ENCODE measurements at regions of chr17 and their contacts with region 1.

Region 1: DNA sequence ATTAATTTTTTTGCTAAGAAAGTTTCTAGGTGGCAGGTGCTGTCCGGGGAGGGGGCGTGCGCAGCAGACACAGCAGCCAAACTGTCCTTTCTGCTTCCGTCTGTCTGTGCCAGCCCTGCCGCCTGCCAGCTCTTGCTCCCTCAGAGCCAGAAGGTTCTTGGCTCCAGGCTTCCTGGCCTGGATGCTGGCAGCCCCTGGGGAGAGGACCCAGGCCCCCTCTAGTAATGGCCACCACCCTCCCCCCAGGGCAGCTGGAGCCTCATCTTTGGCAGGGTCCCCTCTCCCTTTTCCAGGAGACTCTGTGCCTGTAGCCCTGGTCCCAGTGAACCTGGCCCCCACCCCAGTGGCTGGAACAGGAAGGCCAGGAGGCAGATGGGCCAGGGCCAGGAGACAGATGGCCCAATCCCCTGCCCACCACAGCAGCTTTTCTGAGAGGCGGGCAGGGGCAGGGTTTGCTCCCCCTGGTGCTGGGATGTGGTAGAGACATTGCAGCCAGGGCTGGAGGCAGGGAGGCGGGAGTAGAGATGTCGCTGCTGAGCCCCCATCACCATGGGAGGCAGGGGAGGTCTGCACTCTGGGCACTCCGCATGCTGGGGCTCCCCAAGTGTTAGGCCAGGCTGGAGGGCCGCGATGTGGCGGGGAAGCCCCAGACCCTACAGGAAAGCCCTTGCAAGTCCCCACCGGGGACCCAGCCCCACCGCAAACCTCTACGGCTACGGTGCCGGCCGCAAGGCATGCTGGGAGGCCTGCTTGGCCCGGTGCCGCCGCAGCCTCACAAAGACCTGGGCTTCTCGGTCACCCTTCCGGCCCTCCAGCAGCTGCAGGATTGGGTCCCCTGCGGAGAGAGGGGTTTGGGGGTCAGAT is 16.7 kb downstream of the UNC13D start:
- DNase-seq: no peak
- H3K4me3 ChIP-seq: peak overlapping the region; percentile 29
- CTCF ChIP-seq: peak; percentile 87

Region 2: DNA sequence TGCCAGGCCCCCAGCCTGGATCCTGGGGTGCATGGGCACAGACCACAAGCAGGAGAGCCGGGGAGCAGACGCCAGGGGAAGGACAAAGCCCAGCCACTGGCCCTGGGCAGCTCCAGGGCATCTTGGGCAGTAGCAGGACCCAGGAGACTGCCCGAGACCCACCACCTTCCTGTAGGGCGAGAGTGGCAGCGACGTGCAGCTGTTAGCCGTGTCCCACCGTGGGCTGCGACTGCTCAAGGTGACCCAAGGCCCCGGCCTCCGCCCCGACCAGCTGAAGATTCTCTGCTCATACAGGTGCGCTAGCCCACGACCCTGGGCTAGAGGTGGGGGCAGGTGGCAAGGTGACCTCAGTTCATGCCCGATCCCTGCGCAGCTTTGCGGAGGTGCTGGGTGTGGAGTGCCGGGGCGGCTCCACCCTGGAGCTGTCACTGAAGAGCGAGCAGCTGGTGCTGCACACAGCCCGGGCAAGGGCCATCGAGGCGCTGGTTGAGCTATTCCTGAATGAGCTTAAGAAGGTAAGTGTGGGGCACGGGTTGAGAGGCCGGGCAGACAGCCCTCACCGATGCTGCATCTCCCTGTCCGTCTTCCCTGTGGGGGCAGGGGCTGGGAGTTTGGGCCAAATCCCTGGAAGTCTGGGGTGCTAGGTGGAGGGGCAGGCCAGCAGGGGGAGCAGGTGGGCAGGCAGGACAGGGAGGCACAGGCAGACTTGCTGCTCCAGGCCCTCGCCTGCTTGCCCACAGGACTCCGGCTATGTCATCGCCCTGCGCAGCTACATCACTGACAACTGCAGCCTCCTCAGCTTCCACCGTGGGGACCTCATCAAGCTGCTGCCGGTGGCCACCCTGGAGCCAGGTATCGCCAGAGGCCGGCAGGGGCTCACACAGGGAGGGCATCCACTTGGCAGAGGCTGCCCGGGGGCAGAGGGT is 207.7 kb before region 1 on chr17:
- CTCF ChIA-PET with region 1: no interaction called
- POLR2A ChIA-PET with region 1: no interaction called
- DNase-seq: no peak
- H3K4me3 ChIP-seq: no peak overlapping the region
- CTCF ChIP-seq: peak; percentile 78

Region 3: GRCh38 chr17:75764711-75765421 is 62.6 kb before region 1 on chr17 and contains the start of gene GALK1:
- CTCF ChIA-PET with region 1: interaction called, 12 read pairs
- POLR2A ChIA-PET with region 1: interaction called, 3 read pairs
- DNase-seq: no peak
- H3K4me3 ChIP-seq: peak within 1 kb of the TSS; percentile 66
- CTCF ChIP-seq: peak; percentile 77

Region 4: GRCh38 chr17:75784473-75785015 is 42.9 kb before region 1 on chr17 and contains the start of gene UNK:
- CTCF ChIA-PET with region 1: interaction called, 15 read pairs
- POLR2A ChIA-PET with region 1: interaction called, 6 read pairs
- DNase-seq: peak; percentile 98
- H3K4me3 ChIP-seq: peak within 1 kb of the TSS; percentile 79
- CTCF ChIP-seq: no peak

Region 5: DNA sequence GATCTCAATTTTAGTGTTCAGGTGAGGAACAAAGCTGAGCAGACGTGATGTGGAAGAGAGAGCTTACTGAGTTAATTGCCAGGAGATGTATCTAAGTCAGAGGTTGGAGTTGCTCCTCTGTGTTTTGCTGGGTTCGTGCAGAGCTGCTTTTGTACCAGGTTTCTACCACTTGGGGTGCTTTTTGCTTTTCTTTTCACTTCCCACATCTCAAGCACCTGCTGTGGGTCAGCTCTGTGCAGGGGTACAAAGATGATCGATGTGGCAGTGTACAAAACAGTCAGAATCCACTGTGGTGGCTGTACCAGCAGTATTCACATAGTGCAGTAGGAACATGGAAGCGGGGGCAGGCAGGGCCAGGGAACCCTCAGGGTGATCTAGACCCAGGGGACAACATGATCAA is 28.1 kb before region 1 on chr17:
- CTCF ChIA-PET with region 1: interaction called, 72 read pairs
- POLR2A ChIA-PET with region 1: interaction called, 3 read pairs
- DNase-seq: no peak
- H3K4me3 ChIP-seq: no peak overlapping the region
- CTCF ChIP-seq: no peak

Region 6: DNA sequence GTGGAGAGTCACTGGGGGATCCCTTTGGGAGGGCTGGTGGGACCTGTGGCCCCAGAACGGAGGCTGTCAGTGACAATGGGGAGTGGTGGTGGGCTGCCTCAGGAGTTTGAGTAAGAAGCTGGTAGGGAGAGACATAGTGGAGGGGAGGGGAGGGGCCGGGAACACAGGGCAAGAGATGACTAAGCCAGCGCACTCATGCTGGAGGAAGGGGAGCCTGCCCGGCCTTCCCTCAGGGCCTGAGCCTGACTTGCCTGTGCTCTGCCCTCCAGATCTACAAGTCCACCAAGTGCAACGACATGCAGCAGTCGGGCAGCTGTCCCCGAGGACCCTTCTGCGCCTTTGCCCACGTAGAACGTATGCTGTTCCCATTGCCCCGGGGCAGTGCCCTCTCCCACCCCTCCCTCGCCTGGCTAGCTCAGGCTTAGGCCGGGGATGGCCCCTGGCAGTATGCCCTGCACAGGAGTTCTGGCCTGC is 12.5 kb before region 1 on chr17:
- CTCF ChIA-PET with region 1: interaction called, 87 read pairs
- POLR2A ChIA-PET with region 1: no interaction called
- DNase-seq: peak; percentile 23
- H3K4me3 ChIP-seq: no peak overlapping the region
- CTCF ChIP-seq: no peak

Region 7: GRCh38 chr17:75845049-75845860 is 17.8 kb after region 1 on chr17:
- CTCF ChIA-PET with region 1: interaction called, 52 read pairs
- POLR2A ChIA-PET with region 1: interaction called, 3 read pairs
- DNase-seq: no peak
- H3K4me3 ChIP-seq: no peak overlapping the region
- CTCF ChIP-seq: peak; percentile 74

Region 8: GRCh38 chr17:75909812-75910274 is 82.4 kb after region 1 on chr17:
- CTCF ChIA-PET with region 1: no interaction called
- POLR2A ChIA-PET with region 1: no interaction called
- DNase-seq: no peak
- H3K4me3 ChIP-seq: no peak overlapping the region
- CTCF ChIP-seq: no peak